AG04450 (cell line): ENCODE measurements at regions of chr4 and their contacts with region 1.

Region 1: DNA sequence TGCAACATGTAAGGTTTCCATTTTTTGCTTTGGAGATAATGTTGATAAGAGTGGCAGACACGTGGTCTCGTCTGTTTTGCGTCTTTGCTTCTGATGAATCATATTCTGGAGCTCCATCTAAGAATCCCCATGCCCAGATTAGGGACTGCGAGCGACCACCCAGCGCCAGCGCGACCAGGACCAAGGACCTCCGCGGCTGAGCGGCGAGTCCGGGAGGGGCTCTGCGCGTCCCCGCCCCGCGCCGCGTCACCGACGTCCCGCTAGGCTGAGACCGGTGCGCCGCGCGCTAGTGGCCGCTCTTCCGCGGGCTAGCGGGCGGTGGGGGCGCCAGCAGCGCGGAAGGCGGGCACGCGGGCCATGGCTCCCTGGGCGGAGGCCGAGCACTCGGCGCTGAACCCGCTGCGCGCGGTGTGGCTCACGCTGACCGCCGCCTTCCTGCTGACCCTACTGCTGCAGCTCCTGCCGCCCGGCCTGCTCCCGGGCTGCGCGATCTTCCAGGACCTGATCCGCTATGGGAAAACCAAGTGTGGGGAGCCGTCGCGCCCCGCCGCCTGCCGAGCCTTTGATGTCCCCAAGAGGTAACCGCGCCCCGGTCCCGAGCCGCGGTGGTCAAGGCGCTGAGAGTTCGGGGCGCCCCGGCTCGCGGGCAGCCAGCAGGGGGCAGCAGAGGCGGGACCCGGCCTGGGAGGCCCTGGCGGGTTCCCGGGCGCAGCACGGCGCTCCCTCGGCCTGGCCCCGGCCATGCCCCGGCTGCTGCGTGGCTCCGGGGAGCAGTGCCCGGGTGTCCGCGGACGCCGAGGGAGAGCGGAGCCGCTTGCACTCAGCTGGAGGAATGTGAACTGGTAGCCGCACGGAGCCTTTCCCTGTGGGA is at the start of gene SRD5A3:
- DNase-seq: no peak
- H3K4me3 ChIP-seq: peak within 1 kb of the TSS; percentile 71
- H3K27ac ChIP-seq: peak within 1 kb of the TSS; percentile 69
- H3K27me3 ChIP-seq: no peaks in the 10 kb centered on the region
- CTCF ChIP-seq: peak; percentile 70
- polyA plus RNA-seq, gene SRD5A3: 13.2 and 15.8 TPM in 2 replicates

Region 2: GRCh38 chr4:55312489-55313101 is 33.6 kb before region 1 on chr4:
- CTCF ChIA-PET with region 1: interaction called, 14 read pairs
- POLR2A ChIA-PET with region 1: no interaction called
- DNase-seq: no peak
- H3K4me3 ChIP-seq: no peak overlapping the region
- H3K27ac ChIP-seq: no peak overlapping the region
- H3K27me3 ChIP-seq: peaks cover 2% of the 10 kb centered on the region
- CTCF ChIP-seq: peak; percentile 86

Region 3: DNA sequence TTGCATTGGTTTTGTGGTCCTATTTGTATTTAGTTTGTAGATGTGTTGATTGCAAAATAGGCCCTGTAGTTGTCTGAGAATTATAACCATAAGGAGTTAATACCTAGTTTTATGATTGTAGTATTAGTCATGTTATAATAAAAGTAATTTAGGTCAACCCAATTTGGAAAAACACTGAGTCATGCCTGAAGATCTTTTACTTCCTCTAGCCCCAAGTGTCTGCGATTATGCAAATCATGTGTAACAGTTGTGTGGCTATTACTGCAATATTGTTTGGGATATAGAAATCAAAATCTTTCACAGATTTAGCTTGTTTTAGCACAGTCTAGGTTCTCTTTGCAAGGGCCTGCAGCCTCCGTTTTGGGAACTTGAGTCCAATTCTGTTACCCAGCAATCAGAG is 12.5 kb after region 1 on chr4:
- CTCF ChIA-PET with region 1: interaction called, 11 read pairs
- POLR2A ChIA-PET with region 1: no interaction called
- DNase-seq: no peak
- H3K4me3 ChIP-seq: no peak overlapping the region
- H3K27ac ChIP-seq: peak overlapping the region; percentile 52
- H3K27me3 ChIP-seq: no peaks in the 10 kb centered on the region
- CTCF ChIP-seq: no peak

Region 4: DNA sequence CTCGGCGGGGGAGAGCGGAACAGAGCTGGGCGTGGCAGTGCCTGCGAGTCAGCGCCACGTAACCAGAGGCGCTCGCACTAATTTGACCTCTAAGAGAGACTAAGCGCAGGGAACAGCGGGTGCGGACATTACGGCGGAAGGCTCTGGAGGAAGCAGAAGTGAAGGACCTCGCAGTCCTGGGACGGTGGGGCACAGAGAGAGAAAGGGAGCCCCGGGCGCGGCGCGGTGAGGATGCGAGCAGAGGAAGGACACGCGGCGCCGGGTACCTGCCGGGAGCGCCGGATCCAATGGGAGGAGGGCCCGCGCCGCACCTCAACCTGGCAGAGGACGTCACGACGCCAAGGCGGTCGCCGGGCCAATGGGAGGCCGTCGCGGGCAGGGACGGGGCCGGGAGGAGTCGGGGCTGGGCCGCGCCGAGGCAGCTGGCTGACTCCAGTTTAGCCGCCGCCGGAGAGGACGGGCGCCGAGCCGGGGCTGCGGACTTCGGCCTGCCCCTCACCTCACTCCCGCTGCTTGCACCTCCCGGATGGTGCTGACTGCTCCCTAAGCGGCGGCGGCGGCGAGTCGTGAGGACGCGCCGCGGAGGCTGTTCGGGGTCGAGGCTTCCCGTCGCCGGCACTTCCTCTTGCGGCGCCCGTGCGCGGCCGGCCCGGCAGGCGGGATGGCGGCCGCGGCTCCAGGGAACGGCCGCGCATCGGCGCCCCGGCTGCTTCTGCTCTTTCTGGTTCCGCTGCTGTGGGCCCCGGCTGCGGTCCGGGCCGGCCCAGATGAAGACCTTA is 49.5 kb after region 1 on chr4 and contains the start of gene TMEM165:
- CTCF ChIA-PET with region 1: interaction called, 40 read pairs
- POLR2A ChIA-PET with region 1: interaction called, 7 read pairs
- DNase-seq: peak; percentile 46
- H3K4me3 ChIP-seq: peak within 1 kb of the TSS; percentile 79
- H3K27ac ChIP-seq: peak within 1 kb of the TSS; percentile 93
- H3K27me3 ChIP-seq: no peaks in the 10 kb centered on the region
- CTCF ChIP-seq: no peak
- polyA plus RNA-seq, gene TMEM165: 134 and 146 TPM in 2 replicates

Region 5: DNA sequence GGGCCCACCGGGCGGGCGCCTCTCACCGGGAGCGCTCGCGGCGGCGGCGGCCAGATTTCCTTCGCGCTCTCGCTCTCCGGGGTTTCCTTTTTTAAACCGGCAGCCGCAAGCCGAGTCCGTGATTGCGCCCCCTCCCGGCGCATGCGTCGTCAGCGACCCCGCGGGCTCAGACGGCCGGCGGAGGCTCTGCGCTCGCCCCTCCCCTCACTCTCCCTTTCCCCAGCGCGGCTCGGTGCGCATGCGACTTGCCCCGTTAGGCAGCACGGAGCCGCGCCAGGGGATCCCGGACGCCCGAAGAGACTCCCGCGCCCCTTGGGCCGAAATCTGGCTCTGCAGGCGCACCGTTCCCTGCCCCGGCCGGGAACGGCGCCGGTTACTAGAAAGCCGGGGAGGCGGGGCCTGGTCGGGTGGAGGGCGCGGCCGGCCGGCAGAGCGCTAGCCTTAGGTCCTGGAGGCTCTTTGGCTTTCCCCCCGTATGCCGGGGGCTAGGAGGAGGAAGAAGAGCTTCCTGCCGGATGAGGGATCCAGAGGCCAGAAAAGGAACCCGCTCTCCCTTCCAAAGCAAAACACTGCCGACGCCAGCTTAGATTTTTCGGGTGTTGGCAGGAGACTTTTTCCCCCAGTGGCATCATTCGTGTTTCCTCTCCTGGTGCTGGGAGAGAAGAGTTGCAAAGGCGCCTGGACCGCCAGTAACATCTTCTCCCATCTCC is 200.7 kb after region 1 on chr4 and contains the start of gene CLOCK:
- CTCF ChIA-PET with region 1: interaction called, 53 read pairs
- POLR2A ChIA-PET with region 1: interaction called, 7 read pairs
- DNase-seq: peak; percentile 76
- H3K4me3 ChIP-seq: peak within 1 kb of the TSS; percentile 82
- H3K27ac ChIP-seq: peak within 1 kb of the TSS; percentile 83
- H3K27me3 ChIP-seq: no peaks in the 10 kb centered on the region
- CTCF ChIP-seq: peak; percentile 47
- polyA plus RNA-seq, gene CLOCK: 15.1 and 18.8 TPM in 2 replicates